Caco-2 (cell line): ENCODE measurements at regions of chr3 and their contacts with region 1.

Region 1: DNA sequence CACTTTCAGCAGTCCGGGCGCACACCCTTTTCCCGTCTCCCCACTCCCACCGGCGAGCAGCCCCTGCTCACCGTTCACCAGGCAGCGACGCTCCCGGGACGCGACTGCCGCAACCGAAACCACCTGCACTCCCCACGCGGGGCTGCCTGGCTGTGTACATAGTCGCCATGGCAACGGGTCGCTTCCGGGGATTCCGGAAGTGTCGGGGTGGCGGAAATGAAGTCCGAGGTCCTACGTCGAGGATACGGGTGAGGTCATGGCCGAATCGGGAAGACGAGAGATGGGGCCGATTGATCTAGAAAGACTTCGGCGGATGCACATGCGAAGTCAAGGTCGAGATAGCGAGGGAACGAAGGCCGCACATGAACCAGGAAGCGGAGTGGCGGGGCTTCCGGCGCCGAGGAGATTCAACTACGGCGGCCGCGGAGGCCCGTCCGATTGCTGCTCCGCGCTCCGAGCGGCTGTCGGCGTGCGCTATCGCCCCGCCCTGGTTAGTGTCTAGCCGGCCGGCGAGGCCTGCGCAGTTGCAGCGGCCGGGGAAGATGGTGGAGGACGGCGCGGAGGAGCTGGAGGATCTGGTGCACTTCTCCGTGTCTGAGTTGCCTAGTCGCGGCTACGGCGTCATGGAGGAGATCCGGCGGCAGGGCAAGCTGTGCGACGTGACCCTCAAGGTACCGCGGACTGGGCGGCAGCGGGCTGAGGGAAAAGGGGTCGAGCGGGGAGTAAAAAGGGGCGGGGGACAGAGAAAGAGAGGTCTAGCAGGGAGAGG is at the starts of genes KIF9 and KLHL18:
- DNase-seq: peak; percentile 94 to 95
- H3K4me3 ChIP-seq: peak within 1 kb of the TSS; percentile 85
- H3K4me3 Mint-ChIP-seq: peak within 1 kb of the TSS; percentile 96
- H3K27ac Mint-ChIP-seq: peak within 1 kb of the TSS; percentile 100
- H3K4me1 ChIP-seq: peaks cover 4% of the 10 kb centered on the region; the same call in 1 of the 2 replicates
- H3K4me1 Mint-ChIP-seq: no peaks in the 10 kb centered on the region
- H3K27me3 ChIP-seq: no peaks in the 10 kb centered on the region
- H3K27me3 Mint-ChIP-seq: no peaks in the 10 kb centered on the region
- CTCF ChIP-seq: no peak
- total RNA-seq, gene KIF9: 7.1 and 7.2 TPM in 2 replicates
- total RNA-seq, gene KLHL18: 26.1 and 29.5 TPM in 2 replicates

Region 2: DNA sequence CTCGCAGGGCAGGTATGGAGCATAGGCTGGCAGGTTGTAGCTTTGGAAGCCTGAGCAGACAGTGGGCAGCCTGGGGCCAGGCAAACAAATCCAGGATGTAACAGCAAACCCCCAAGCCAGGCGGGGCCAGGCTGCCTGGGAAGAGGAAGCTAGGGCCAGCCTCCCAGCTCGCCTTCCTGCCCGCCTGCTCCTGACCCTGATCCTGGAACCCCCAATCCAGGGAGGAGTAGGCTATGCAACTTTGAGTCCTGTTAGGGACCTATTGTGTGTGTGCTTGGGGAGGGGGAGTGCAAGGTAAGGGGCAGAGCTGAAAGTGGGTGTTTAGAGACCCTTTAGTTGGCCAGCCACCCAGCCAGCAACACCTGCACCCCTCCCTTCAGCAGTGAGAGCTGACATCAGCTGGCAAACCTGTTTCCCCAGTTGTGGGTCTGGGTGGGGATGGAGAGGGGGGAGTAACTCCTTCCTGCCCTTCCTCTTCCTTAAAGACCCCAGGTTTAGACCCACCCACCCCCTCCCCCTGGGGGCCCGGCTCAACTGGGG is 300.6 kb before region 1 on chr3:
- CTCF ChIA-PET with region 1: no interaction called
- POLR2A ChIA-PET with region 1: no interaction called
- intact Hi-C with region 1: loop called (anchors 2 kb)
- DNase-seq: peak in 1 of 2 experiments; percentile 51
- H3K4me3 ChIP-seq: no peak overlapping the region; the same call in 1 of the 2 replicates
- H3K4me3 Mint-ChIP-seq: peak overlapping the region; percentile 47
- H3K27ac Mint-ChIP-seq: peak overlapping the region; percentile 68
- H3K4me1 ChIP-seq: peaks cover 50% of the 10 kb centered on the region
- H3K4me1 Mint-ChIP-seq: peaks cover 30% of the 10 kb centered on the region
- H3K27me3 ChIP-seq: no peaks in the 10 kb centered on the region
- H3K27me3 Mint-ChIP-seq: no peaks in the 10 kb centered on the region
- CTCF ChIP-seq: no peak

Region 3: GRCh38 chr3:47164007-47164881 is 118.4 kb before region 1 on chr3 and contains the start of gene SETD2:
- CTCF ChIA-PET with region 1: no interaction called
- POLR2A ChIA-PET with region 1: interaction called, 3 read pairs
- intact Hi-C with region 1: loop called (anchors 5 kb)
- DNase-seq: peak; percentile 94 to 96
- H3K4me3 ChIP-seq: peak within 1 kb of the TSS; percentile 95
- H3K4me3 Mint-ChIP-seq: peak within 1 kb of the TSS; percentile 78
- H3K27ac Mint-ChIP-seq: peak within 1 kb of the TSS; percentile 81
- H3K4me1 ChIP-seq: peaks cover 10% of the 10 kb centered on the region; the same call in 1 of the 2 replicates
- H3K4me1 Mint-ChIP-seq: peaks cover 25% of the 10 kb centered on the region
- H3K27me3 ChIP-seq: no peaks in the 10 kb centered on the region
- H3K27me3 Mint-ChIP-seq: no peaks in the 10 kb centered on the region
- CTCF ChIP-seq: peak in 1 of 2 experiments; percentile 36
- total RNA-seq, gene SETD2: 47.6 and 48.8 TPM in 2 replicates

Region 4: GRCh38 chr3:47250309-47251060 is 32.1 kb before region 1 on chr3:
- CTCF ChIA-PET with region 1: no interaction called
- POLR2A ChIA-PET with region 1: no interaction called
- intact Hi-C with region 1: loop called (anchors 2 kb)
- DNase-seq: peak; percentile 62
- H3K4me3 ChIP-seq: no peak overlapping the region
- H3K4me3 Mint-ChIP-seq: no peak overlapping the region
- H3K27ac Mint-ChIP-seq: no peak overlapping the region
- H3K4me1 ChIP-seq: no peaks in the 10 kb centered on the region
- H3K4me1 Mint-ChIP-seq: no peaks in the 10 kb centered on the region
- H3K27me3 ChIP-seq: no peaks in the 10 kb centered on the region
- H3K27me3 Mint-ChIP-seq: no peaks in the 10 kb centered on the region
- CTCF ChIP-seq: peak; percentile 52 to 56

Region 5: GRCh38 chr3:47324278-47324865 is 41.8 kb after region 1 on chr3:
- CTCF ChIA-PET with region 1: interaction called, 3 read pairs
- POLR2A ChIA-PET with region 1: no interaction called
- intact Hi-C with region 1: loop called (anchors 1 kb)
- DNase-seq: peak; percentile 72 to 80
- H3K4me3 ChIP-seq: no peak overlapping the region
- H3K4me3 Mint-ChIP-seq: no peak overlapping the region
- H3K27ac Mint-ChIP-seq: no peak overlapping the region
- H3K4me1 ChIP-seq: peaks cover 9% of the 10 kb centered on the region
- H3K4me1 Mint-ChIP-seq: peaks cover 11% of the 10 kb centered on the region
- H3K27me3 ChIP-seq: no peaks in the 10 kb centered on the region
- H3K27me3 Mint-ChIP-seq: no peaks in the 10 kb centered on the region
- CTCF ChIP-seq: peak; percentile 65 to 74

Region 6: DNA sequence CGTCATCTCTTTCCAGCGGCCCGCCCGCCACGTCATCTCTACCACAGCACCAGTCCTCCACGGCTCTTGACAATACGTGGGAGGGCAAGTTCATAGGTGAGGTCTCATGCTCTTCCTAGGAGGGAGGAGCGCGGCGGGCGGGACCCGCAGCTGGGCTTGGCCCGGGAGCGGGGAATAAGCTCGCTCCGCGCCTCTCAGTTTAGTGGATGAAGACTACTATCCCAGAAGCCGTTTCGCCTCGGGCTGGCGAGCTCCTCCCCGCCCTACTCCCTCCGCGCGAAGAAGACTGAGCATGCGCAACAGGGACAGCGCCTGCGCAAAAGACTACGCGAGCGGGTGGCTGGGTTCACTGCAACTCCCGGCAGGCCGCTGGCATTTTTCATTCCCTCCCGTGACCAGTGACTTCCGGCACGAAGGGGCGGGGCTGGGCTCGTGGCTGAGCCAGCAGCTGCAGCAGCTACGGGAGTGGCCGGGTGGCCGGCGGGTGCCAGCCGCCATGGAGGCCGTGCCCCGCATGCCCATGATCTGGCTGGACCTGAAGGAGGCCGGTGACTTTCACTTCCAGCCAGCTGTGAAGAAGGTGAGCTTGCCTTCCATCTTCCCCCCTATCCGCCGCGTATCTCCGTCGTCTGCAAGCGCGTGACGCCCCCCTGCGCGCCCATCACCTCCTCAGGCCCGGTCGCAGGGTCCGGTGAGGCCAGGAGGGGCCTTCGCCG is 98.2 kb after region 1 on chr3 and contains the start of gene PTPN23:
- CTCF ChIA-PET with region 1: no interaction called
- POLR2A ChIA-PET with region 1: interaction called, 5 read pairs
- intact Hi-C with region 1: loop called (anchors 10 kb)
- DNase-seq: peak; percentile 98 to 99
- H3K4me3 ChIP-seq: peak within 1 kb of the TSS; percentile 76
- H3K4me3 Mint-ChIP-seq: peak within 1 kb of the TSS; percentile 89
- H3K27ac Mint-ChIP-seq: peak within 1 kb of the TSS; percentile 97
- H3K4me1 ChIP-seq: peaks cover 25% of the 10 kb centered on the region
- H3K4me1 Mint-ChIP-seq: peaks cover 25% of the 10 kb centered on the region
- H3K27me3 ChIP-seq: no peaks in the 10 kb centered on the region
- H3K27me3 Mint-ChIP-seq: no peaks in the 10 kb centered on the region
- CTCF ChIP-seq: no peak
- total RNA-seq, gene PTPN23: 46.8 and 49.6 TPM in 2 replicates